GM13977 (cell line): ENCODE measurements at regions of chr4 and their contacts with region 1.

Region 1: DNA sequence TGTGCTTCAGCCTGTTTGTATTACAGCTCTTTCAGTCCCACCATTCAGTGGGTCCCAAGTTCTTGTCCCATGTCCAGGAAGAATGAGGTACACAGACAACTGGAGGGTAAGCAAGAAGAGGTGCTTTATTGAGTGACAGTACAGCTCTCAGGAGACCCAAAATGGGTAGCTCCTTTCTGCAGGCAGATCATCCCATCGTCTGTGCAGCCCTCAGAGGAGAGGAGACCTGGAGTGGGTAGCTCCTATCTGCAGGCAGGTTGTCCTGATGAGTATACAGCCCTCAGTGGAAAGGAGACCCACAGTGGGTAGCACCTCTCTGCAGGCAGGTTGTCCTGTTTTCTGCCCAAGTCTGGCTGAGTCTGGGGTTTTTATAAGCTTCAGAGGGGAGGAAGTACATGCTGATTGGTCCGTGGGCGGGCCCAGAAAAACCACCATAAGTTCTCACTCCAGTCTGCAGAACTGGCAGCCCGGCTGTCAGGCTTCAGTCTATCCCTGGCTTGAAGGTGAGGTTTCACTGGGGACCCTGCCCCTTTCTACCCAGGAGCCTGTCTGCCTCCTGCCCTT is 18.0 kb downstream of the GRK4 start:
- DNase-seq: no peak
- CTCF ChIP-seq: no peak

Region 2: GRCh38 chr4:3037957-3038461 is 56.7 kb after region 1 on chr4:
- in situ Hi-C with region 1: loop called (anchors 10 kb)
- DNase-seq: no peak
- CTCF ChIP-seq: no peak

Region 3: DNA sequence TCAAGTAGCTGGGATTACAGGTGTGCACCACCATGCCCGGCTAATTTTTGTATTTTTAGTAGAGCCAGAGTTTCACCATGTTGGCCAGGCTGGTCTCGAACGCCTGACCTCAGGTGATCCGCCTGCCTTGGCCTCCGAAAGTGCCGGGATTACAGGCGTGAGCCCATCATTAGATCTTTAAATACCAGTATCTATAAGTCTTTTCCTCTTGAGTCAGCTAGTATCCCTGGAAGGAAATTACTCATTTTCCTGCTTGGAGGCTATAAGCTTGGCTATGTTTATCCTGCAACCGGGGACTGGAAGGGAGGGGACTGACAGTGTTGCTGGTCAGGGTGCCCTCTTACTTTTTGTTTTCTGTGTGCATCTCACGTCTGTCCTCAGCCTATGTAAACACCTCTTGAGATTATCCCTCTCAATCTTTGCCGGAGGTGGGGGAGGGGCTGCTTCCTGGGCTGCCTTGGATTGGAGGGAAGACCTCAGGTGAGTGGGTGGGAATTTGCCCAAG is 130.0 kb after region 1 on chr4:
- in situ Hi-C with region 1: no loop called
- DNase-seq: no peak
- CTCF ChIP-seq: no peak

Region 4: DNA sequence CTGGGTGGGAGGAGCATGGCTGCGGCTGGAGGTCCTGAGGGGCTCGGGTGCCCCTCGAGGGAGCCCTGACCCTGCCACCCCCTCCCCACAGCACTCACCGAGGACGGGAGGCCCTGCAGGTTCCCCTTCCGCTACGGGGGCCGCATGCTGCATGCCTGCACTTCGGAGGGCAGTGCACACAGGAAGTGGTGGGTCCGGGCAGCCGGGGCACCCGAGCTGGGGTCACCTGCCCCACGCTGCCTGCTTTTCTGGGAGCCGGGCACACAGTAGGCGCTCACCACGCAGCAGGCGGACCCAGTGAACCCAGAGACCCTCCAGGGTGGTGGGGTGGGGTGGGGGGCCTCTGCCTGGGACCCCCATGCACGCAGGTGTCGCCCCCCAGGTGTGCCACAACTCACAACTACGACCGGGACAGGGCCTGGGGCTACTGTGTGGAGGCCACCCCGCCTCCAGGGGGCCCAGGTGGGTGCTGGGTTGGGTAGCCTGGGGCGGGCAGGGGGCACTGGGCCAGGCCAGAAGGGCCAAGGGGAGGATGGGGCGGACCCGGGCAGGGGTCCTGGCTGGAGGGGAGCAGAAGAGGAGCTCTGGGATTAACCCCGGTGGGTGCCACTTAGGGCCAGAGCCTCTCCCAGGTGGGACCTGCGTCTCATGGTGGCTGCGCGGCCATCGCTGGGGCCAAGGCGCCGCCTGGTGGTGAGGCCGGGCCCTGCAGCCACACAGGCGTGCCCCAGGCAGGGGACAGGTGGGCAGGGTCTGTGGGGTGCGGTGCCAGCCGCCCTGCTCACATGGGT is 461.8 kb after region 1 on chr4:
- in situ Hi-C with region 1: no loop called
- DNase-seq: peak; percentile 96
- CTCF ChIP-seq: peak; percentile 98